IMR-90 (cell line): ENCODE measurements at regions of chr2 and their contacts with region 1.

Region 1: GRCh38 chr2:18741895-18742732 is 152.7 kb upstream of the NT5C1B start:
- DNase-seq: peak; percentile 79
- ATAC-seq: peak; percentile 81
- H3K4me3 ChIP-seq: no peak overlapping the region
- H3K27ac ChIP-seq: peak overlapping the region; percentile 75; the same call in 1 of the 2 replicates
- H3K4me1 ChIP-seq: peaks cover 15% of the 10 kb centered on the region; the same call in 1 of the 2 replicates
- H3K27me3 ChIP-seq: no peaks in the 10 kb centered on the region
- CTCF ChIP-seq: no peak
- POLR2A ChIP-seq: no peak
- RAD21 ChIP-seq: no peak

Region 2: DNA sequence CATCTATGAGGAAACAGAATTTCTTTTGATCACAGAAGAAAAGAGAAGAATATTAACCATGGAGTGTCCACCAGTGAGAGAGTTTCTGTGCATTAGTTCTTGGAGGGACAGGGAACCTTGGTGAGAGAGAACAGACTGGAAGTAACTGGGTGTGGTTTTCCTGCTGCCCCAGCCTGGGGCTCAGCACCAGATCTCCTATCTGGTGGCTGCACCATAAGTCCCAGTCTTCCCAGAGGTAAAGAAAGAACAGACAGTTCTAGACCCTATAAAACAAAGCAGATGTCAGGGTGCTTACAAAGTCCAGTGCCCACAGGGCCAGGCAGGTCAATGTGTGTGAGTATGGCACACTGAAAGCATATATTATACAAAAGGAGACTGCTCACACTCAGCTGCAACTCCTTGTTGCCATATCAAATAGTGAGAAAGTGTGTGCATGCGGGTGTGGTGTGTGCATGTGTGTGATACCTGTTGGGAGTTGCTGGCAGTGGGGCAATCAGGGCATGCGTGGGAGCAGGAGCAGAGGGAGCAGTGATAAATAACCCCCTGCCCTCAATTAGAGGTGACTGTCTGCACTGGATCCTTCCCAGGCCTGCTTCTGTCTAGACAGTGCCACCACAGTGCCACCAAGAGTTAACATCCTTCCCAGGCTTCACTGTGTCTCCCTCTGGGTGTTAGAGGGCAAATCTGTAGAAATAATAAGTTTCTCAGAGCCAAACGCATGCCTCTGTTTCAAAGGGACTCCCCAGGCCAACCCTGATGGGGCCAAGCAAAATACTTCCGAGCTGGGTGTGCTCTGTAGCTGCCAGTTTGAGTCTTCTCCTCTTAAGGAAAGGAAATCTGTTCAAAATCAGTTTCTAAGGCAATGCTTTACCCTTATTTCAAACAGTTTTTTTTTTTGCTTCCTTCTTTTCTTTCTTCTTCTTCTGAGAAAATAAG is 227.3 kb before region 1 on chr2:
- CTCF ChIA-PET with region 1: no interaction called
- POLR2A ChIA-PET with region 1: no interaction called
- dilution Hi-C with region 1: no loop called
- in situ Hi-C with region 1: no loop called
- intact Hi-C with region 1: no loop called
- DNase-seq: no peak
- ATAC-seq: no peak
- H3K4me3 ChIP-seq: no peak overlapping the region
- H3K27ac ChIP-seq: peak overlapping the region; percentile 93; the same call in 1 of the 2 replicates
- H3K4me1 ChIP-seq: peaks cover 27% of the 10 kb centered on the region
- H3K27me3 ChIP-seq: no peaks in the 10 kb centered on the region
- CTCF ChIP-seq: no peak
- POLR2A ChIP-seq: no peak
- RAD21 ChIP-seq: no peak

Region 3: DNA sequence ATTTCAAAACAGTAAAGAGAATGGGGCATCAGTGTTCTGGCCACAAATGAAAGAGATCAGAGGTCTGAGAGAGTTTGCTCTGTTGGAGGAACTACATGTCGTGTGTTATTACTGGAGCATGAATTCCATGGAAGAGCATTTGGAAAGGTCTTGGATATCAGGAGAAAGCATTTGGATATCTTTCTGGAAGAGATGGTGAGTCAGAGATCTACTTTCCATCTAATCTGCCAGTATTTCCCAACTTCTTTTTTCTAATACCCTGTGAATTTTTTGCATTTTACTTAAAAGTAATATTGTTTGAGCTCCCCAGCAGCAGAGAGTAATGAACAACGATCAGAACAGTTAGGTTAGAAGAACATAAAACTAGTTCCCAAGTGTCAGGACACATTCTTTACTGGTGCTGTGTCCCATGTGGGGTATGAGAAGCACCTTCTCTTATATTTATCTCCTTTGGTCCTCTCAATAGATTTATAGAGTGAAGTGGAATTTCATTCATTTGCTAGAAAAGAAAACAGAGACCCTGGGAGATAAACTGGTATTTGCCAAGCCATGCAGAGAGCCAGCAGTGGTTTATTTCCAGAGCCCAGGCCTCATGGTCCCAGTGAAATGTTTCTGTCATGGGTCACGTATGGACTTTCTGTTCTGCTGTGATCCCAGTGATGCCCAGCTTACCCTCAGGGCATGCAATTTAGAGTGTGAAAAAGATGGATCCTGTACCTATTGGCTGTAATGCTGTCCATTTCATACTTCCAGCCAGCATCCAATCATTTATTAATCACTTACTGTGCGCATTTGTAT is 21.9 kb before region 1 on chr2:
- CTCF ChIA-PET with region 1: no interaction called
- POLR2A ChIA-PET with region 1: no interaction called
- dilution Hi-C with region 1: no loop called
- in situ Hi-C with region 1: no loop called
- intact Hi-C with region 1: no loop called
- DNase-seq: peak; percentile 58
- ATAC-seq: peak; percentile 82
- H3K4me3 ChIP-seq: no peak overlapping the region
- H3K27ac ChIP-seq: no peak overlapping the region
- H3K4me1 ChIP-seq: peaks cover 1% of the 10 kb centered on the region; the same call in 1 of the 2 replicates
- H3K27me3 ChIP-seq: no peaks in the 10 kb centered on the region
- CTCF ChIP-seq: no peak
- POLR2A ChIP-seq: no peak
- RAD21 ChIP-seq: no peak

Region 4: GRCh38 chr2:18762667-18763066 is 20.6 kb after region 1 on chr2:
- CTCF ChIA-PET with region 1: no interaction called
- POLR2A ChIA-PET with region 1: no interaction called
- dilution Hi-C with region 1: no loop called
- in situ Hi-C with region 1: no loop called
- intact Hi-C with region 1: loop called (anchors 1 kb)
- DNase-seq: peak; percentile 37
- ATAC-seq: peak; percentile 44
- H3K4me3 ChIP-seq: no peak overlapping the region
- H3K27ac ChIP-seq: no peak overlapping the region
- H3K4me1 ChIP-seq: no peaks in the 10 kb centered on the region
- H3K27me3 ChIP-seq: no peaks in the 10 kb centered on the region
- CTCF ChIP-seq: no peak
- POLR2A ChIP-seq: no peak
- RAD21 ChIP-seq: no peak

Region 5: DNA sequence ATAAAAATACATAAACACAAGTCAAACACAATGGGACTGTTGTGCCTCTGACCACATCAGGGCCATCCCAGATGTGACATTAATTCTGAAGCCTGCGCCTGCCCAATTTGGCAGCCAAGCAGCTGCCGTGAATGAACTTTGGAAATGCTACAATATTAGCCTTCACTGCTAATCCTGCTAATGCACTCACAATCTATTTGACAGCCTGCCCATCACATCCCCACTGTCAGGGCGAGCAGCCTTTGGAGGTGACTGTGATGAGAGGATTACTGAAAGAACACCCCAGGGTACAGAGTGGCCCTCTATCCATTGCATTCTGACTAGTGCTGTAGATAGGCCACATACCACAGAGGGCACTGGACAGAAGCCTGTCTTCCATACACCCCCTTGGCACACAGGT is 594.7 kb after region 1 on chr2:
- CTCF ChIA-PET with region 1: no interaction called
- POLR2A ChIA-PET with region 1: no interaction called
- dilution Hi-C with region 1: no loop called
- in situ Hi-C with region 1: no loop called
- intact Hi-C with region 1: no loop called
- DNase-seq: no peak
- ATAC-seq: no peak
- H3K4me3 ChIP-seq: no peak overlapping the region
- H3K27ac ChIP-seq: no peak overlapping the region
- H3K4me1 ChIP-seq: no peaks in the 10 kb centered on the region
- H3K27me3 ChIP-seq: no peaks in the 10 kb centered on the region
- CTCF ChIP-seq: no peak
- POLR2A ChIP-seq: no peak
- RAD21 ChIP-seq: no peak

Region 6: DNA sequence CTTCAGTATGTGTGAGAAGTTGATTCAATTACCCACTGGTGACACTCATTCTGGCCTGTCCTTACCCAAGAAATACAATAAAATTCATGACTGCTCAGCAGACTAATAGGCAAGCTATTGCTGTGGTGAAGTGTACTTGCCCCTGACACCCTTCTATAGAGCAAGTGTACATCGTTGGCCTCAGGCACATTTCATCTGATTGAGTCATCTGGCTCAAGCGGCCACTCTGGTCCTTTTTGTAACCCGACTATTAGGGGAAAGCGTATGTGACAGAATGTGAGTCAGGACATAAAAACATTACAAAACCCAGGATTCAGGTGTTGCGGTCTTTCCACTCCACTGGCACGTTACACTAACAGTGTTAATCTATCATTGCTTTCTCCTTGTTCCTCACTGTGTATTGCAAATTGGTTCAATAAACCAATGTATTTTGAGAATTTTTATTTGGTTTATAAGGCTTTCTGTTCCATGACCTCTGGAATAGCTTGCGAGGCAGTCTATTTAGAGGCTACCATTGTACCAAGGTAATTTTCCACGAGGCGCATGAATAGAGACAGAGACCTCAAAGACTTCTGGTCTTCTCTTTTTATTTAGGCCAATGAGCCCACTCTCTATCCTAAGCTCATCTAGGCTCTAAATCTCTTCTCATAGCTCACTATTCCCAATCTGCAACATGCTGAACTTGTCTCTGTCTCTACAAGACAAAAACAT is 1169.8 kb after region 1 on chr2:
- CTCF ChIA-PET with region 1: no interaction called
- POLR2A ChIA-PET with region 1: no interaction called
- dilution Hi-C with region 1: no loop called
- in situ Hi-C with region 1: no loop called
- intact Hi-C with region 1: no loop called
- DNase-seq: peak; percentile 93
- ATAC-seq: peak; percentile 98
- H3K4me3 ChIP-seq: no peak overlapping the region
- H3K27ac ChIP-seq: no peak overlapping the region
- H3K4me1 ChIP-seq: no peaks in the 10 kb centered on the region; the same call in 1 of the 2 replicates
- H3K27me3 ChIP-seq: peaks cover 4% of the 10 kb centered on the region; the same call in 1 of the 2 replicates
- CTCF ChIP-seq: no peak
- POLR2A ChIP-seq: no peak
- RAD21 ChIP-seq: no peak